PC-9 (cell line): ENCODE measurements at regions of chr5 and their contacts with region 1.

Region 1: GRCh38 chr5:106510321-106510720 is 1160.4 kb downstream of the EFNA5 start:
- DNase-seq: no peak
- H3K4me3 ChIP-seq: no peak overlapping the region
- H3K27ac ChIP-seq: no peak overlapping the region
- H3K4me1 ChIP-seq: no peaks in the 10 kb centered on the region
- H3K27me3 ChIP-seq: no peaks in the 10 kb centered on the region
- CTCF ChIP-seq: no peak

Region 2: DNA sequence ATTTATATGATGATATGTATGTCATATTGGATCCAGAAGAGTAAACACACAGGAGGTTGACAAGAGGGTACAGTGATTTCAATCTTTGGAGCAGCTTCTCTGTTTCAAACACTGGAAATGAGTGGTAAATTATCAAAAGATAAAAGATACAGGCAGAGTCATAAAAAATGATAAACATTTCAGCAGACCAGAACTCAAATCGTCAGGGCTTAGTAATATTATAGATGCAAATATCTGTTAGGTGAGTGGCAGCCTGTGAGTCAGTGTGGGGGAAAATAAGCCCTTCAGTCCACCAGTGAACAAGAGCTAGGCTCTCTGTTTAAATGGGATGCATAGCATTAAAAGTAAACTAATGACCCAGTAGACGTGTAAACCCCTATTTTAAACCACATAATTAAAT is 217.7 kb before region 1 on chr5:
- CTCF ChIA-PET with region 1: interaction called, 18 read pairs
- POLR2A ChIA-PET with region 1: no interaction called
- intact Hi-C with region 1: no loop called
- DNase-seq: no peak
- H3K4me3 ChIP-seq: no peak overlapping the region
- H3K27ac ChIP-seq: no peak overlapping the region
- H3K4me1 ChIP-seq: no peaks in the 10 kb centered on the region
- H3K27me3 ChIP-seq: no peaks in the 10 kb centered on the region
- CTCF ChIP-seq: no peak

Region 3: GRCh38 chr5:106545325-106545724 is 35.0 kb after region 1 on chr5:
- CTCF ChIA-PET with region 1: no interaction called
- POLR2A ChIA-PET with region 1: interaction called, 10 read pairs
- intact Hi-C with region 1: no loop called
- DNase-seq: no peak
- H3K4me3 ChIP-seq: no peak overlapping the region
- H3K27ac ChIP-seq: no peak overlapping the region
- H3K4me1 ChIP-seq: no peaks in the 10 kb centered on the region
- H3K27me3 ChIP-seq: no peaks in the 10 kb centered on the region
- CTCF ChIP-seq: no peak